ENCODE measurements at regions of chr4 and their contacts with region 1.

Region 1: DNA sequence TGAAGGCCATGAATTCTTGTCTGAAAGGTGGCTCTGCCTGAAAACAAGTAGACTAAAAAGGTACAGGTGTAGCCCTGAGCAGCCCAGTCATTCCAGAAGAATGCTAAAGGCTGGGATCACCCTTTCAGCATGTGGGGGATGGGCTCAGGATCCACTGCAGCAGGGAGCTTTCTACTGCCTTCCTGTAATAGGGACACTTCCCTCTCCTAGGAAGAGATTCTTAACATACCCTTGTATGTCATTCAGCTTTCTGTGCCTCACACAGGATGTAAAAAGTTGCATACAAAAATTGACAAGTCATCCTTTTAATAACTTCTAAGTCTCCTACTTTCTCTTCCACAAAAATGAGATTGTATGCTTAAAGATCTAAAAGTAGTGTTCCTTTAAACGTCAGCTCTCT is 123.3 kb downstream of the ZNF518B start:
- DNase-seq: peak; percentile 35 to 58
- H3K4me3 ChIP-seq: no peak overlapping the region
- H3K4me3 Mint-ChIP-seq: no peak overlapping the region
- H3K27ac Mint-ChIP-seq: no peak overlapping the region
- H3K4me1 ChIP-seq: peaks cover 5% of the 10 kb centered on the region
- H3K4me1 Mint-ChIP-seq: no peaks in the 10 kb centered on the region
- H3K27me3 ChIP-seq: no peaks in the 10 kb centered on the region
- H3K27me3 Mint-ChIP-seq: no peaks in the 10 kb centered on the region
- CTCF ChIP-seq: no peak

Region 2: DNA sequence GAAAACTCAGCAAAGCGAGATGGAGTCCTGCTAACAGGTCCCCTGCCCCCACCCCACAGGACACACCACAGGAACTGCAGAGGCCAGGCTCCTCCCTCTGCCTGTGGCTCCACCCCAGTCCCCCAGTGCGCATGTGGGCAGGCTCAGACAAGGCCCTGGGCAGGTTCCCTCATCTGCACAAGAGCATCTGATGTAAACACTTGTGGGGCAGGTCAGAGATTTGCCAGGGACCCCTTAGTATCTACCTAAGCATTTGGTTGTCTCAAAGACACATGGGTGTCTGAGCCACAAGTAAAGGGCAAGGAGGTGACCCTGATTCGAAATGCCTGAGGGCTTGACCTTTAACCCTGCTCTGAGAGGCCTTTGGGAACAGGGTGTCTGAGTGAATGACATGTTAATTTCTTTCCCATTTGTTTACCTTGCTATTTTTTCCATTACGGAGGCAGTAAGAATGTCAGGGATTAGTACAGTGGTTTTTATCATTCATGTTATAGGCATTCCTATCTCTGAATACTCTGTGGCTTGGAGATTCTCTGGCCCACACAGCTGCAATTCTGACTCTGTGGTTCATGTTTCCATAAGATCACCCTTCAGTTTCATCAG is 38.0 kb after region 1 on chr4:
- CTCF ChIA-PET with region 1: no interaction called
- POLR2A ChIA-PET with region 1: no interaction called
- intact Hi-C with region 1: loop called (anchors 1 kb)
- DNase-seq: peak; percentile 31 to 37
- H3K4me3 ChIP-seq: no peak overlapping the region
- H3K4me3 Mint-ChIP-seq: no peak overlapping the region
- H3K27ac Mint-ChIP-seq: no peak overlapping the region
- H3K4me1 ChIP-seq: peaks cover 8% of the 10 kb centered on the region
- H3K4me1 Mint-ChIP-seq: no peaks in the 10 kb centered on the region
- H3K27me3 ChIP-seq: no peaks in the 10 kb centered on the region
- H3K27me3 Mint-ChIP-seq: no peaks in the 10 kb centered on the region
- CTCF ChIP-seq: no peak

Measured in Caco-2 (cell line).